Panc1 (cell line): ENCODE measurements at regions of chr7 and their contacts with region 1.

Region 1: GRCh38 chr7:12111422-12112405 is 99.4 kb upstream of the TMEM106B start:
- DNase-seq: peak; percentile 67
- ATAC-seq: peak; percentile 93
- H3K4me3 ChIP-seq: peak overlapping the region; percentile 57 to 63
- H3K27ac ChIP-seq: peak overlapping the region; percentile 97
- H3K4me1 ChIP-seq: peaks cover 47% of the 10 kb centered on the region
- H3K27me3 ChIP-seq: no peaks in the 10 kb centered on the region
- CTCF ChIP-seq: peak; percentile 75

Region 2: DNA sequence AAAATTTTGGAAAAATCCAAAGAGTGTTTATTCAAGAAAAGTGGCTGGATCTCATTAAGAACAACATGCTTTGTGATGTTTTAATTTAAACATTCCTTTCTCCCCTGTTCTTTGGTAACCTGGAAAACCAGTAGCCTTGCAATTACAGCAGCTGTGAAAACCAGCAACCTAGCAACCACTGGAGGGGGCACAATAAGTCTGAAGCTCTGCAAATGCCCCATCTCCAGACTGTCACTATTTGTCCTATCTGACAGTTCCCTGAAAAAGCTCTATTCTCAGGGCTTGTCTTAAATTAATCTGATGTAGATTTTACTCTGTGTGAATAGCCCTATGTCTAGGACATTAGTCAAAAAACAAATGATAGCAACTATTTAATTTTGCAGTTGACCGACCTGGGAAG is 142.1 kb before region 1 on chr7:
- CTCF ChIA-PET with region 1: no interaction called
- POLR2A ChIA-PET with region 1: interaction called, 3 read pairs
- in situ Hi-C with region 1: no loop called
- intact Hi-C with region 1: loop called (anchors 5 kb)
- DNase-seq: no peak
- ATAC-seq: peak; percentile 70
- H3K4me3 ChIP-seq: no peak overlapping the region
- H3K27ac ChIP-seq: peak overlapping the region; percentile 49
- H3K4me1 ChIP-seq: peaks cover 23% of the 10 kb centered on the region
- H3K27me3 ChIP-seq: no peaks in the 10 kb centered on the region
- CTCF ChIP-seq: peak; percentile 56

Region 3: DNA sequence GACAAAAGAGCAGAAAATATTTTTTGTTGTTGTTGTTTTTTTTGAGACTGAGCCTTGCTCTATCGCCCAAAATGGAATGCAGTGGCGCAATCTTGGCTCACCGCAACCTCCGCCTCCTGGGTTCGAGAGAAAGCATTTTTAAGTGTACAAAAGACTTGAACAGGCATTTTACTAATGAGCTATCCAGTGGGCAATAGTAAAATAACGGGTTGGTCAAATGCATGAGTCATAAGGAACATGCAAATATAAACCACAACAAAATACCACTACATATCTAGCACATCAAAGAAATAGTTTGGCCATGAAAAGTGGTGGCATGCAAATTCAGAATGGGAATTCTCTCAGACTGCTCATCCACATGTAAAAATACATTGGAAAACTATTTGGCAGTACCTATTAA is 27.7 kb after region 1 on chr7:
- CTCF ChIA-PET with region 1: no interaction called
- POLR2A ChIA-PET with region 1: no interaction called
- in situ Hi-C with region 1: no loop called
- intact Hi-C with region 1: no loop called
- DNase-seq: no peak
- ATAC-seq: no peak
- H3K4me3 ChIP-seq: no peak overlapping the region
- H3K27ac ChIP-seq: peak overlapping the region; percentile 27; the same call in 1 of the 2 replicates
- H3K4me1 ChIP-seq: peaks cover 10% of the 10 kb centered on the region
- H3K27me3 ChIP-seq: no peaks in the 10 kb centered on the region
- CTCF ChIP-seq: no peak